ENCODE measurements at regions of chr5 and their contacts with region 1.

Region 1: DNA sequence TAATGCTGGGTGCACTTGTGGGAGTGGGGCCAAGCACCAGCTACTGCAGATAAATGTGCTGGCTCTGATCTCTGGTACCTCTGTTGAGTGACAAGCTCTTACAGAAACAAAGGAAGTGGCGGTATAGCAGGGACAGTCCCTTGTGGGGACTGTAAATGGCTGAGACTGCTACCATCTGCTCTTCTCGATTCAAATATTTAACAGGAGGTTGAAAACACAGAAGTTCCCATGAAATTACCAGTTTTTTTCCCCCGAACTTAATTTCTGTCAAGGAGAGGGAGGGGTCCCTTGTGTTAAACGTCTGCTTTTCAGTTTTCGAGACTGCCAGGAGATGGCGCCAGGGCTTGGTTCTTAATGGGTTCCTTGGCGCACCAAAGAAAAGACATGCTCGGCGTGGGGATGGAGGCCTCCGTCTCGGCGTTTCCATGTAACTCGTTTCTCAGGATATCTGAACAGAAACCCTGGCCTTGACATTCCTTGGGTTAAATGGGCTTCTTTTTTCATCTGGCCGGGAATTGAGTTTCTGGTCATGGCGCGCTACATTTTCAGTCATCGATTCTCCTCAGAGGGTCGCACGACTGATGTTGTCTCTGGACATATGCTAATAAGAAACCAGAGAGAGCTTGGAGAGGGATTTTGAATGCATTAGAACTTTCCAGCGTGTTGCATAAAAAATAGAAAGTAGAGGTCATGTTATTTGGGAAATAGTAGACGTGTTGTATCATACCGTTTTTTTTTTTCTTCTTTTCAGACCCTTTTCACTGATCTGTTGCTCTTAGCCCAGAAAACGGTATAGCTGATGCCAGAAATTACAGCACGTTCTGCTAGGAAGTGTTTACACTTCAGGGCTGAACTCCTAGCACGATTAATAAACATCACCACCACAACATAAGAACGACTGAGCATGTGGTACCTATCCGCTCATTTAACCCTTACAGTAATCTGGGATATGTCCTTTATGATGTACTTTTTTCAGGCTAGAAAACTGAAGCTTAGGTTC is 64.0 kb downstream of the CARTPT start:
- DNase-seq: peak; percentile 92
- H3K4me3 ChIP-seq: peak overlapping the region; percentile 60
- H3K27ac ChIP-seq: no peak overlapping the region
- H3K4me1 ChIP-seq: 0 out of 2 replicates have a peak, but pooled peaks cover 3% of the 10 kb centered on the region
- H3K27me3 ChIP-seq: 0 out of 2 replicates have a peak, but pooled peaks cover 1% of the 10 kb centered on the region

Region 2: DNA sequence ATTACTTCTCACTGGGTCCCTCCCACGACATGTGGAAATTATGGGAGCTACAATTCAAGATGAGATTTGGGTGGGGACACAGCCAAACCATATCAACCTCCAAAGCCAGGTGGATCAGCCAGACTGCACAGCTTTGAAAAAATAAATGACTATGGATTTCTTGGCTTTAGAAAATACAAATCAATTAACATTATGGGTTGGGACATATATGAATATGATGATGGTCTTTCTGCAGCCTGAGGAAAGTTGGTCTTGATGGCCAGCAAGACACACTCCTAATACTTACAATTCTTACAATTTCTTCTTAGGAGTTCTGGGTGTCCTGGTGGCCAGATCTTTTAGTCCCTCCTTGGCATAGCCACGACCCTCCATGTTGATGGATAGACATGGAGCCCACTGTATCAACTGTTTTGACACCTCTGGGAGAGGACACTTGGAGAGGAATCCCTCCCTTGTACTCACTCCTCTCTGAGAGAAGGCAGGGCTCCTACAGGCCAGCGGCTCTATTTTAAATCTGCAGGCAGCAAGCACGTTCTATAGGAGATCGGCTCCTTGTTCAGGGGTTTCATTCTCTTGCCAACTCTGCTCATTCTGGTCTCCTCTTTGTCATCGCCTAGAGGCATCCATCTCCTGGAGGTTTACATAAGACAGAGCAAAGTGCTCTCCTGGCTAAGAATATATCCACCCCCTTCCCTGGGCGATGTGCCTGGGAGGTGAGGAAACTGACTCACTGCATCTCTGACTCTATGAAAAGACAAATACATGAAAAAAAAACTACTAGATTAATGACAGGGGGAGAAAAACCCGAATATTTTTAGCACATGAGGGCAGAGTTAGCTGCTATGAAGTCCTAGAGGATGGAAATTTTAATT is 81.9 kb after region 1 on chr5:
- in situ Hi-C with region 1: no loop called
- DNase-seq: peak; percentile 81
- H3K4me3 ChIP-seq: no peak overlapping the region
- H3K27ac ChIP-seq: no peak overlapping the region
- H3K4me1 ChIP-seq: peaks cover 13% of the 10 kb centered on the region
- H3K27me3 ChIP-seq: peaks cover 23% of the 10 kb centered on the region

Region 3: GRCh38 chr5:72108202-72109061 is 325.4 kb after region 1 on chr5:
- in situ Hi-C with region 1: loop called (anchors 25 kb)
- DNase-seq: peak; percentile 88
- H3K4me3 ChIP-seq: peak overlapping the region; percentile 88
- H3K27ac ChIP-seq: peak overlapping the region; percentile 42
- H3K4me1 ChIP-seq: peaks cover 29% of the 10 kb centered on the region
- H3K27me3 ChIP-seq: no peaks in the 10 kb centered on the region

Region 4: GRCh38 chr5:72307968-72308852 is 525.1 kb after region 1 on chr5:
- in situ Hi-C with region 1: loop called (anchors 10 kb)
- DNase-seq: peak; percentile 100
- H3K4me3 ChIP-seq: peak overlapping the region; percentile 80
- H3K27ac ChIP-seq: peak overlapping the region; percentile 91
- H3K4me1 ChIP-seq: peaks cover 7% of the 10 kb centered on the region; the same call in 1 of the 2 replicates
- H3K27me3 ChIP-seq: no peaks in the 10 kb centered on the region

Measured in GM23248 (cell line).